ENCODE measurements at regions of chr17 and their contacts with region 1.

Region 1: DNA sequence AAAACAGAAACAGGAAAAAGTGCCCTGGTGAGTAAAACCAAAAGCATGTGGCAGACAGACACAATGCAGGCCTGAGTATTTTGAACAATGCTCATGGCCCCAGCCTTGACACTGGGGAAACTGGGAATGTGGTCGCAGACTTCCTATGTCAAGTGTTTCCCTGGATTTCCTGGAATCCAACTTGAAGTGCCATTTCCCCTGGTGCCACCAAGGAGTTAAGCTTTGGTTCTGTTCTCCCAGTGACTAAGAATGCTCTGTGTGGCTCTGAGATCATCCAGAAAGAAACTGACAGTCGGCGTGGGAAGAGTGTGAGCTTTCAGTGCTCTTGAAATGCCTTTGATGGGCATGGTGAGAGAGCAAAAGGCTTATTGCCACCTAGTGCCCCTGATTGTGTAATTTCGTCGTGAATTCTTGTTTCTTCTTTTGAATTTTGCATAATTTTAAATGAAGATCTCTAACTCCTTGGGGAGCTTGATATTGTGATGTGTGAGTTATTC is 96.0 kb downstream of the YPEL2 start:
- DNase-seq: peak; percentile 33
- ATAC-seq: no peak
- H3K4me3 Mint-ChIP-seq: no peak overlapping the region
- H3K27ac Mint-ChIP-seq: peak overlapping the region; percentile 0
- H3K4me1 Mint-ChIP-seq: peaks cover 22% of the 10 kb centered on the region
- H3K27me3 Mint-ChIP-seq: no peaks in the 10 kb centered on the region

Region 2: DNA sequence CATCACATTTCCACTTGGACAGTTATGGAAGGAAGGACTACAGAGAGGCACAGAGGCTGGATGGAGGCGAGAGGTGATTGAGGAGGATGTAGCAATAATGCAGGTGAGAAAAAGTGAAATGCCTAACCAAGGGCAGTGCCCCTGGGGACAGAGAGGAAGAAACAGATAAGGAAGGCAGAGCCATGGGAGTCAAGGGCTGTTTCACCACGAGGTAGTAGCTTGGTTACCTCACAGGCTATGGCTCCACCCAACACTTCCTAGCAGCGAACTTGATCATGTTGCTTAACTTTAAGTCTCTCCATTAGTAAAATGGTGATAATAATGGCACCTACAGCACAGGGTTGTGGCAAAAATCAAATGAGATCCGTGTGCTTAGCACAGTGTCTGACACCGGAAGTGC is 12.1 kb before region 1 on chr17:
- CTCF ChIA-PET with region 1: interaction called, 13 read pairs
- POLR2A ChIA-PET with region 1: no interaction called
- DNase-seq: no peak
- ATAC-seq: peak; percentile 9
- H3K4me3 Mint-ChIP-seq: no peak overlapping the region
- H3K27ac Mint-ChIP-seq: peak overlapping the region; percentile 83
- H3K4me1 Mint-ChIP-seq: peaks cover 64% of the 10 kb centered on the region
- H3K27me3 Mint-ChIP-seq: no peaks in the 10 kb centered on the region

Measured in activated CD8-positive, alpha-beta T cell treated with anti-CD3 and anti-CD28 coated beads, Interleukin-2, amount 10 ng/mL, durations not matched to agents 7 days and 5 days (primary cell).